Natural killer cell (primary cell): ENCODE measurements at regions of chr2 and their contacts with region 1.

Region 1: GRCh38 chr2:74458132-74458925 is at the start of gene WBP1:
- DNase-seq: peak; percentile 98 to 100
- ATAC-seq: peak; percentile 77 to 93 (median 81)
- H3K4me3 ChIP-seq: peak within 1 kb of the TSS; percentile 89
- H3K4me3 Mint-ChIP-seq: peak within 1 kb of the TSS; percentile 98
- H3K27ac ChIP-seq: peak within 1 kb of the TSS; percentile 99
- H3K27ac Mint-ChIP-seq: peak within 1 kb of the TSS; percentile 98 to 99
- H3K4me1 ChIP-seq: peaks cover 37% of the 10 kb centered on the region
- H3K4me1 Mint-ChIP-seq: peaks cover 59 to 73% of the 10 kb centered on the region in 2 donors
- H3K27me3 ChIP-seq: no peaks in the 10 kb centered on the region
- H3K27me3 Mint-ChIP-seq: no peaks in the 10 kb centered on the region
- CTCF ChIP-seq: no peak
- total RNA-seq, gene WBP1: 65.1 to 68.3 (median 65.4) TPM

Region 2: DNA sequence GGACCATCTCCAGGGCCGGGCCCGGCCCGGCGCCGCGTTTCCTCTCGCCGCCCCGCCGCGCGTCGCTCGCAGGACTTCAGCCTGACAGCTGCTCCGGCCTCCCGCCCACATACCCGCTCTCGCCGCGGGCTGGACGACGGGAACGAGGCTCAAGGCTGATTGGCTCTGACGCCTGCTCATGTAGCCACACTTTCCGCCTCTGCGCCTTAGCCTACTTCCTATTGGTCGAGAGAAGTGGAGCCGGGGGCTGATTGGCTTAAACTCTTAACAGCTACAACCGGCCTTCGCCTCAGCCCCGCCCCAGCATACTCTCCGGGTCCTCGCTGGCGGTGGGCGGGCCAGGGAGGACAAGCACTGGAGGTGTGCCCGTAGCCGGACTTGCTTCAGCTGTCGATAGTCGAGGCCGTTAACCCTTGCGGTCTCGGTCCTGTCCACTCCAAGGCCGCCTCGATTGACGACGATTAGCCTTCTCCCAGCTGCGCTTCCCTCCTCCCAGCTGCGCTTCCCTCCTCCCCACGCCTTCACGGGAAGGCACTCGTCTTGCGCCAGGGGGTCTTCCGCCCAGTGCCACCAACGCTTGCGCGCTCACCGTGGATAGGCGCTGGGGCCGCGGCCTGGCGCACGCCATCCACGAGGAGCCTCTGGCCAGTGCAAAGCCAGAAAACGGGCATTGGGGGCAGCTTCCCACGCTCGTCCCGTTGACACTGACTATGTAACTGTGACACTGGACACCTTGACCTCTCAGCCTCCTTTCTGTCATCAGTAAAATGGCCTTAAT is 1225.0 kb before region 1 on chr2 and contains the start of gene PRADC1:
- intact Hi-C with region 1: loop called (anchors 10 kb)
- DNase-seq: peak; percentile 95 to 97
- ATAC-seq: peak; percentile 81 to 91 (median 82)
- H3K4me3 ChIP-seq: peak within 1 kb of the TSS; percentile 97
- H3K4me3 Mint-ChIP-seq: peak within 1 kb of the TSS; percentile 96
- H3K27ac ChIP-seq: peak within 1 kb of the TSS; percentile 83
- H3K27ac Mint-ChIP-seq: peak within 1 kb of the TSS; percentile 94 to 96
- H3K4me1 ChIP-seq: peaks cover 17% of the 10 kb centered on the region
- H3K4me1 Mint-ChIP-seq: peaks cover 34 to 47% of the 10 kb centered on the region in 2 donors
- H3K27me3 ChIP-seq: no peaks in the 10 kb centered on the region
- H3K27me3 Mint-ChIP-seq: no peaks in the 10 kb centered on the region
- CTCF ChIP-seq: no peak
- total RNA-seq, gene PRADC1: 8.3 to 9.7 (median 9.1) TPM

Region 3: DNA sequence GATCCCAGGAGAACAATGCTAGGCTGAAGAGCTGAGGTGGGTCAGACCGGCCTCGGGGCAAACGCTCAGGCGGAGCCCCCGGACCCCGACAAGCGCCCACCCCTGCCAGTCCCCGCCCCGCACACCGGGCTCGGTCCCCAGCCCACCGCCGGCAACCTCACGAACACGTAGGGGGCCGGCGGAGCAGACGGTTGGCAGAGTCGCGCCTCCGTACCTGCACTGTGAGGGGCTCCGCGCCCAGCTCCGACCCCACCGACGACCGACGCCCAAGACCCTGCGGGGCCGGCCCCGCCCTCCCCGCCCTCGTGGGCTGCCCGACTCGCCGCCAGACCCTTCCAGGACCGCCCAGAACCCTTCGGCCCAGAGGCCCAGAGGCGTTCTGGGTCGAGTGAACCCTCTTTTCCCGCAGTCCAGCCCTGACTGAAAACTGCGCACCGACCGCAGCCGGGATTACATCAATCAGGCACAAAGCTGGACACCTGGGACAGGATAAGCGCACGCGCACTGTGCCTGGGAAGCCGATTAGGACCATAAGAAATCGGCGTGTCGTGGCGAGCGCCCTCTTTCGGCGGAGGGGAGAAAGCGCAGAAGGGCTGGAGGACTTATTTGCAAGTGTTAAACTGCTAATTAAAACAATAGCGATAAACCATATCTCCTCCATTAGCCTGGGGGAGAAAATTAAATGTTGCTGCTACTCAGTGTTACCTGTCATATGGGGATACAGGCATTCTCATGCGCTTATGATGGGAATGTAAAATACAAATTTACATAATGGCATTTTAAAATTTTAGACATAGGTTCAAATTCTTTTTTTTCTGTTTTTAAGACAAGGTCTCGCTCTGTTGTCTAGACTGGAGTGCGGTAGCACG is 66.5 kb before region 1 on chr2:
- intact Hi-C with region 1: loop called (anchors 5 kb)
- DNase-seq: peak; percentile 96 to 98
- ATAC-seq: peak; percentile 93 to 96 (median 94)
- H3K4me3 ChIP-seq: peak overlapping the region; percentile 66
- H3K4me3 Mint-ChIP-seq: peak overlapping the region; percentile 94
- H3K27ac ChIP-seq: peak overlapping the region; percentile 96
- H3K27ac Mint-ChIP-seq: peak overlapping the region; percentile 92 to 93
- H3K4me1 ChIP-seq: peaks cover 11% of the 10 kb centered on the region
- H3K4me1 Mint-ChIP-seq: peaks cover 5 to 6% of the 10 kb centered on the region in 2 donors
- H3K27me3 ChIP-seq: no peaks in the 10 kb centered on the region
- H3K27me3 Mint-ChIP-seq: peaks cover 0 to 6% of the 10 kb centered on the region in 2 donors
- CTCF ChIP-seq: peak; percentile 94

Region 4: DNA sequence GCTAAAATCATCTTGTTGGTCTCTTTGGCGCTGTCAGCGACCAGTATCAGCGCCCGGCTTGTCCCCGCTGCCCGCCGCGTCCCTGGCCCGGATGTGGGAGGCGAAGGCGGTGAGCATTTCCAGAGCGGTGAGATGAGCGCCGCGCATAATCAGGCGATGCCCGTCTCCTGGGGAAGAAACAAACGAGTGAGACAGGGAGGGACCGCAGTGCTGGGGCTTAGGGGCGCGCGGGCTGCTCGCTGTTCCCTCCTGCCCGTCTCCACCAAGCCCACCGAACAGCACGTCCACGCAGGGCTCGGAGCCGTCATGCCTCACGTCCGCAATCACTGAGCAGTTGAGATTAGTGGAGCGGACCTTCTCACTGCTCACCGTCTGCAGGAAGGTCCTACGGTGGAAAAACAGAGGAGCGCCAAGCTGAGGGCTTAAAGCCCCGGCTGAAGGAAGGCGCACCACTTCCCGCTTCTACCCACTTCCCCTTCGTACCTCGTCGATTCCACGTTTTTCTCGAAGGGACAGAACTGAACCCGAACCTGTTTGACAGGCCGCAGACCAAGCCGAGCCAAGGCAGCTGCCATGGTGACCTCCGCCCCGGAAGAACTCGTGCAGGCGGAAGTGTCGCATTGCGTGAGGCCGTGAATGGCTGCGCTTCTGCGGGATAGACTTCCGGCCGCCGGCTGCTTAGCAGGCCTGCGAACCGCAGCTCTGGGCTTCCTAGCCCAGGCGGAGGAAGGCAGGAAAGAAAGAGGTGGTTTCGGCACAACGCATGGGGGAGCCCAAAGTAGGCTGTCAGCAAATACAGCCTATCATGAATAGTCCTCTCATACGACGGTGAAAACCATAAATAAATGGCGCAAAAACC is 14.0 kb after region 1 on chr2 and contains the start of gene MRPL53:
- intact Hi-C with region 1: loop called (anchors 1 kb)
- DNase-seq: peak; percentile 95 to 99
- ATAC-seq: peak; percentile 90 to 96 (median 94)
- H3K4me3 ChIP-seq: peak within 1 kb of the TSS; percentile 50
- H3K4me3 Mint-ChIP-seq: peak within 1 kb of the TSS; percentile 95
- H3K27ac ChIP-seq: peak within 1 kb of the TSS; percentile 82
- H3K27ac Mint-ChIP-seq: peak within 1 kb of the TSS; percentile 97 to 98
- H3K4me1 ChIP-seq: peaks cover 24% of the 10 kb centered on the region
- H3K4me1 Mint-ChIP-seq: peaks cover 23 to 27% of the 10 kb centered on the region in 2 donors
- H3K27me3 ChIP-seq: no peaks in the 10 kb centered on the region
- H3K27me3 Mint-ChIP-seq: no peaks in the 10 kb centered on the region
- CTCF ChIP-seq: no peak
- total RNA-seq, gene MRPL53: 42.4 to 49.7 (median 42.4) TPM

Region 5: GRCh38 chr2:74507145-74507925 is 49.0 kb after region 1 on chr2 and contains the start of gene PCGF1:
- intact Hi-C with region 1: loop called (anchors 1 kb)
- DNase-seq: peak; percentile 99
- ATAC-seq: peak; percentile 88 to 97 (median 91)
- H3K4me3 ChIP-seq: peak within 1 kb of the TSS; percentile 86
- H3K4me3 Mint-ChIP-seq: peak within 1 kb of the TSS; percentile 100
- H3K27ac ChIP-seq: peak within 1 kb of the TSS; percentile 97
- H3K27ac Mint-ChIP-seq: peak within 1 kb of the TSS; percentile 100
- H3K4me1 ChIP-seq: peaks cover 46% of the 10 kb centered on the region
- H3K4me1 Mint-ChIP-seq: peaks cover 38 to 59% of the 10 kb centered on the region in 2 donors
- H3K27me3 ChIP-seq: peaks cover 12% of the 10 kb centered on the region
- H3K27me3 Mint-ChIP-seq: peaks cover 19 to 28% of the 10 kb centered on the region in 2 donors
- CTCF ChIP-seq: no peak
- total RNA-seq, gene PCGF1: 22.9 to 35.9 (median 33.2) TPM

Region 6: DNA sequence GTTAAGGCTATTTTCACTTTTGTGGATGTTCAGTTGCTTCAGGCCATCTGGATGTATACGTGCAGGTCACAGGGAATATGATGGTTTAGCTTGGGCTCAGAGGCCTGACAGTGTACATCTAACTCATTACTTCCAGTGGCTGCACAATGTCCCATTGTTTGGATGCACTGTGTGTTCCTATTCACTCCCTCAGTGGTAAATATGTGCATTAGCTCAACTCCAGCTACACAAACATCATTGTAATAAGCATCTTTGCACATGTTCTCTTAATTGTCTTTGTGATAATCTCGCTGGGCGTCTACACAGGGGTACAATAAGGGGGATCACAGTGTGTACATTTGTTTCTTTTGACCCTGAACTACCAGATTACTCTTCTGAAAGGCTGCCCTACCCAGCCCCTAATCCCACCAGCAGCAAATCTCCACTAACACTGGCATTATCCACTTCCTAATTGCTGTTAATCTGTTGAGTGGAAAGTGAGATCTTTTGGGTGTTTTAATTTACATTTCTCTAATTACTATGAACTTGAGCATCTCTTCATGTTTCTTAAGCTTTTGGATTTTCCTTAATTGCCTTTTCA is 444.0 kb after region 1 on chr2:
- intact Hi-C with region 1: no loop called
- DNase-seq: no peak
- ATAC-seq: no peak
- H3K4me3 ChIP-seq: no peak overlapping the region
- H3K4me3 Mint-ChIP-seq: no peak overlapping the region
- H3K27ac ChIP-seq: no peak overlapping the region
- H3K27ac Mint-ChIP-seq: no peak overlapping the region
- H3K4me1 ChIP-seq: no peaks in the 10 kb centered on the region
- H3K4me1 Mint-ChIP-seq: no peaks in the 10 kb centered on the region
- H3K27me3 ChIP-seq: no peaks in the 10 kb centered on the region
- H3K27me3 Mint-ChIP-seq: peaks cover 4 to 8% of the 10 kb centered on the region in 2 donors
- CTCF ChIP-seq: no peak

Region 7: GRCh38 chr2:75018162-75018561 is 559.8 kb after region 1 on chr2:
- intact Hi-C with region 1: no loop called
- DNase-seq: no peak
- ATAC-seq: no peak
- H3K4me3 ChIP-seq: no peak overlapping the region
- H3K4me3 Mint-ChIP-seq: no peak overlapping the region
- H3K27ac ChIP-seq: no peak overlapping the region
- H3K27ac Mint-ChIP-seq: no peak overlapping the region
- H3K4me1 ChIP-seq: no peaks in the 10 kb centered on the region
- H3K4me1 Mint-ChIP-seq: no peaks in the 10 kb centered on the region
- H3K27me3 ChIP-seq: no peaks in the 10 kb centered on the region
- H3K27me3 Mint-ChIP-seq: peaks cover 17 to 43% of the 10 kb centered on the region in 2 donors
- CTCF ChIP-seq: no peak